ENCODE measurements at regions of chr2 and their contacts with region 1.

Region 1: GRCh38 chr2:205925373-205926337 is 160.3 kb downstream of the INO80D start:
- DNase-seq: no peak
- H3K4me3 ChIP-seq: peak overlapping the region; percentile 45
- CTCF ChIP-seq: peak; percentile 98

Region 2: GRCh38 chr2:205685314-205686055 is 240.2 kb before region 1 on chr2:
- CTCF ChIA-PET with region 1: interaction called, 12 read pairs
- POLR2A ChIA-PET with region 1: interaction called, 5 read pairs
- DNase-seq: no peak
- H3K4me3 ChIP-seq: peak overlapping the region; percentile 85
- CTCF ChIP-seq: no peak

Region 3: DNA sequence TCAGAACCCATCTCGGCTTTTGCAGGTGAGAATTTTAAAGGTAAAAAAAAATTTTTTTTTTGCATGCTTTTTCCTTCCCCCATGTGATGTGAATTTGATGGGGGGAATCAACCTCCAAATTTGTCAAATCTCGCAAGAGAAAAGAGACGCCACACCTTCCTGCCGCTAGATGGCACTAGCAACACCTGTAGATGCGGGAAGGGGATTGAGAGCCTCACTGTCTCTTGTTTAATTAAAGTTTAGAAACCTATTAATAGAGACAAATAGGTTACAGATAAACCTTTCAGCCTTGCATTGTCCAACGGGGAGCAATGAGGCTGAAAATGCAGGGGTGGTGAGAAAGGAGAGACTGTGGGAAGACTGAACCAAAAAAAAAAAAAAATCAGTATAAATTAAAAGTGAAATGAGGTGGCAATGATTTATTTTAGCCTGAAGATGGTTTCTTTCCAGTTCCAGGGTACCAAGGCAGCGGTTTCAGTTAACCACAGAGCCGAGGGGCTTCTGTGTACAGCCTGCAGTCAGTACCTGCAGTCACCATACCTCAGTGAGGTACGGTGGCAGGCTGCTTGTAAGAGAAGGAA is 158.8 kb before region 1 on chr2:
- CTCF ChIA-PET with region 1: interaction called, 13 read pairs
- POLR2A ChIA-PET with region 1: no interaction called
- DNase-seq: no peak
- H3K4me3 ChIP-seq: no peak overlapping the region
- CTCF ChIP-seq: peak; percentile 81

Region 4: DNA sequence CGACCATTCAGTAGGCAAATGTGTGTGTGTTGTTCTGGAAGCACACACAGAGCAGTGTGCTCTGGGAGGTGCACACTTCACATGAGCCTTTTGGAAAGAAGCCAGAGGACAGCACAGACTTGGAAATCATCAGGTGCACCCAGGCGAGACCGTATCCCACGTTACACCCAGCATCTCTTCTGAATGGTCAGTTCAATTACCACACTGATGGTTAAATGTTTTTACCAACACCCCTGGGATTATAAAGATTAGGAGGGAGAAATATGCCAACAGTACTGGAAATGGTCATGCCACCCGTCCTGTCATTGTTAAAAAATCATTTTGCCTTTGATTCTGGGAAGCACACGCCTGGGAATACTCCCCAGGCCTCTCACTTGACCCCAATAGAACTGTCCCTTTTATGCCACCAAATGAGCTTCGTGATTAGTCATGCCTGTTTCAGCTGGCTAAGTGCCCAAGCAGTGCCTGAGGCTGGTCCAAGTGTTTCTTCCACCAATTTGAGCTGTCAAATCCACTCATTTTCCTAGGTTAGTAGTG is 59.7 kb before region 1 on chr2:
- CTCF ChIA-PET with region 1: no interaction called
- POLR2A ChIA-PET with region 1: no interaction called
- DNase-seq: no peak
- H3K4me3 ChIP-seq: no peak overlapping the region
- CTCF ChIP-seq: no peak

Region 5: GRCh38 chr2:205903638-205904037 is 22.0 kb before region 1 on chr2:
- CTCF ChIA-PET with region 1: interaction called, 52 read pairs
- POLR2A ChIA-PET with region 1: no interaction called
- DNase-seq: no peak
- H3K4me3 ChIP-seq: no peak overlapping the region
- CTCF ChIP-seq: peak; percentile 17

Region 6: DNA sequence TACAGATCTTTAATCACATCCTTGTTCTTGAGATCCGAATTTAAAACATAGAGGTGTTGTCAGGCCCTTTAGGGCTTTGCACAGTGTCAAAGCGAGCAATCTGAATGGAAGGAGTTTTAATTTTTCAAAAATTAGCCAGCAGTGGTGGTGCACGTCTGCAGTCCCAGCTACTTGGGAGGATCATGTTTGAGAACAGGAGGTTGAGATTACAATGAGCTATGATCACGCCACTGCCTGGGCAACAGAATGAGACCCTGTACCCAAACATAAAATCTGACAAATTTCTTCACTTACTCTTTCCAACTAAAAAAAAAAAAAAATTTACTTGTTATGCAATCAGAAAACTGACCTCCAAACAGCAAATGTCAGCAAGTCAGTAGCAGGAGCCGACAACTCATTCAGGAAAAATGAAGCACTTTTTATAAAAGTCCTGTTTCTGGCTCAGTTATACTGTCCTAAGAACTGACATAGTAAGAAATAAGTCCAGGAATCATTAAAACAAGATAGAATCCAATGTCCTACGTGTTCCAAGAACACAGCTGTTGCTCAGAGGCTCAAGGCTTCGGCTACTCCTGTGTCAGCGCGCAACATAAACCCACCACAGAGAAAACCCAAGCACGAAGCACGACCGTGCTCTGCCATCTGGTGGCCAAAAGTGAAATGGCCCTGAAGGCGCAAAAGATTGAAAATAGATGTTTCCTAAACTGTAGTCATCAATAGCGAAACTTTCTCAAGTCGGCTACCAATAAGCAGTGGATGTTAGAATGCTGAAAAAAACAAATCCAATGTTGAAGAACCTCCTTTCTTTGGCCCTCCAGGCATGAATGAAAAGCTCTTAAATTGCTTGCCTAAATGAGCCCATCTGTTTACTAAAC is 22.2 kb after region 1 on chr2:
- CTCF ChIA-PET with region 1: interaction called, 46 read pairs
- POLR2A ChIA-PET with region 1: no interaction called
- DNase-seq: peak; percentile 10
- H3K4me3 ChIP-seq: no peak overlapping the region
- CTCF ChIP-seq: peak; percentile 89